ENCODE measurements at regions of chr6 and their contacts with region 1.

Region 1: GRCh38 chr6:72622094-72622940 is 453 bp downstream of the KCNQ5 start:
- DNase-seq: peak; percentile 35
- ATAC-seq: peak; percentile 63 to 66

Region 2: GRCh38 chr6:73129653-73130443 is 507.5 kb after region 1 on chr6:
- intact Hi-C with region 1: loop called (anchors 5 to 10 kb)
- DNase-seq: peak; percentile 86
- ATAC-seq: peak; percentile 90 to 92

Region 3: DNA sequence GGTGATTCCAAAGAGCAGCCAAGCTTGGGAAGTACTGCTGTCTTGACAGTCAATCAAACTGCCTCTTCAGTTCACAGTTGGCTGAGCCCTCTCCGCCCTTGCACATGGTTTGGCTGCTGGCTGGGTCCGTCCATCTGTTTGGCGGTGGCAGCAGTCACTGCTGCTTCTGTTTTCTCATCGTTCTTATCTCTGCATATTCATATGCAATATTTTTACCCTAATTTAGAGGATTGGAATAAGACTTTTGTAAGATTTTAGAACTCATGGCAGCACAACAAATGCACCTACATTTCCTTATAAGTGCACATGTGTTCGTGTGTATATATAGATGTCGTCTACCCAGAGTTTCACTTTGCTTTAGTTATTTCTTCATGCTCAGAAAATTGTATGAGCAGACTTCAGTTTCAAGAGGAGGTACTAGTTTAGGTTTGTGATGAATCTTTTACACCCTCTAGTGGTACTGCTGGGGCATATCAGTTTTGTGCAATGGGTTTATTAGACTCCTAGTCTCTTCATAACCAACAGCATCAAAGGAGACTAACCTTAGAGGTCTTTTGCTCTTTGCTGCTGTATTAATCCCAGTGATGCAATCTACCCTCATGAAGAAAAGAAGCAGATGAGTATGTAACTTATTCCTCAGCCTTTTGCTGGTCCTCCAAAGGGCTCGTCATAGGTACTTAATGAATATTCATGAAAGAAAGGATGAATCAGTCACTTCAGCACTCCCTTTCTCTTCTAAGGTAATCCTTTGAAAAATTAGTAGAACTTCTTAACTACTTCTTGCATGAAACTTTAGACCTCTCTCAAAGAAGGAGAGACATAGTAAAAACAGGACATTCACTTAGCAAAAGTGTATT is 558.7 kb after region 1 on chr6:
- intact Hi-C with region 1: loop called in 1 of 2 experiments (anchors 10 kb)
- DNase-seq: no peak
- ATAC-seq: peak; percentile 84 to 94

Measured in left cardiac atrium (tissue), 4 donors.